Calu3 (cell line): ENCODE measurements at regions of chr14 and their contacts with region 1.

Region 1: GRCh38 chr14:56491299-56492285 is 88.0 kb upstream of the TMEM260 start:
- DNase-seq: peak; percentile 41
- H3K4me3 Mint-ChIP-seq: no peak overlapping the region
- H3K27ac Mint-ChIP-seq: no peak overlapping the region
- H3K4me1 Mint-ChIP-seq: no peaks in the 10 kb centered on the region
- H3K27me3 Mint-ChIP-seq: peaks cover 65% of the 10 kb centered on the region
- CTCF ChIP-seq: peak; percentile 66

Region 2: GRCh38 chr14:56331592-56332216 is 159.9 kb before region 1 on chr14:
- CTCF ChIA-PET with region 1: no interaction called
- intact Hi-C with region 1: no loop called
- DNase-seq: no peak
- H3K4me3 Mint-ChIP-seq: no peak overlapping the region
- H3K27ac Mint-ChIP-seq: no peak overlapping the region
- H3K4me1 Mint-ChIP-seq: peaks cover 9% of the 10 kb centered on the region
- H3K27me3 Mint-ChIP-seq: no peaks in the 10 kb centered on the region
- CTCF ChIP-seq: no peak

Region 3: DNA sequence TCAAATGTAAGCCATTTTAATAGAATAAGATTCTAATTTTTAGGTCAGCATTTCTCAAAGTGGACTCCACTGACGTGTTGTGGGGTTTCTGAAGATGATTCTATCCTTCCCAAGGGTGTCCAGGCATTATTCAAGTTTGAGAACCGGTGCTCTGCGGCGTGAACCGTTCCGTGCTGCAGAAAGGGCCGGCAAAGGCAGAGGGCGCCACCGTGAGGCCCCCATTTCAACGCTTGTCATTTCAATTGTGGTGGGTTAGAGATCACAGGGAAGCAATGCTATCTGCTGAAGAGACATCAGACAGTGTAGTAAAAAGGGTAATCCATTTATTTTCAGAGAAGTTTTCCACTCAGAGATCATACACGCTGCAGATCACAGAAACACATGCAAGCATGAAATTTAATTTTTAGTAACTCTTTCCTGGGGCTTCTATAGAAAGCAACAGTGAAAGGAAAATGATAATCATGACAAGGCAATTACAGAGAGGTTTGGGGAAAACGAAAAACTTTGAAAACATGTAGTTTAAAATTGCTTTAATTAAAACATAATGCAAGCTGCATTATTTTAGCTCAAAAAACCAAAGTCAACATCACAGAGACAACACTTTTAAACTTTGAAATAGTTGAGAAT is 575.4 kb after region 1 on chr14:
- CTCF ChIA-PET with region 1: no interaction called
- intact Hi-C with region 1: loop called (anchors 5 kb)
- DNase-seq: peak; percentile 52
- H3K4me3 Mint-ChIP-seq: no peak overlapping the region
- H3K27ac Mint-ChIP-seq: no peak overlapping the region
- H3K4me1 Mint-ChIP-seq: no peaks in the 10 kb centered on the region
- H3K27me3 Mint-ChIP-seq: peaks cover 11% of the 10 kb centered on the region
- CTCF ChIP-seq: peak; percentile 55

Region 4: DNA sequence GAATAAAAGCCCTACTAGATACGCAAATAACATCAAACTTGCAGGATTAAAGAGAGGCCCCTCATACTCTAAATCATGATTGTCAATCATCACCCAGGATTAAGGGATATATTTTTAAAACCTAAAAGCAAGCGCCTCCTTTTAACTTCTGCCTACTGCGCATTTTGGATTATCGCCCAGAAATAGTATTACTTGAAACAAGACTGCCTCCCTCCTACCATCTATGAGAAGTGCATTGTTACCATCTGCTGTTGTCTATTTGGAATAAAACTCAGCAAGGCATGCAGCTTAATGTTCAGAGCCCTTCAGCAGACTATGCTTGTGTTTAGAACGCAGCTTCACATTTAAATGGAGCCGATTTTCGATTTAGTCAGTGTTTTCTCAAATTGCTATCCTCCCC is 697.5 kb after region 1 on chr14:
- CTCF ChIA-PET with region 1: no interaction called
- intact Hi-C with region 1: loop called (anchors 5 kb)
- DNase-seq: no peak
- H3K4me3 Mint-ChIP-seq: no peak overlapping the region
- H3K27ac Mint-ChIP-seq: no peak overlapping the region
- H3K4me1 Mint-ChIP-seq: no peaks in the 10 kb centered on the region
- H3K27me3 Mint-ChIP-seq: peaks cover 51% of the 10 kb centered on the region
- CTCF ChIP-seq: no peak

Region 5: DNA sequence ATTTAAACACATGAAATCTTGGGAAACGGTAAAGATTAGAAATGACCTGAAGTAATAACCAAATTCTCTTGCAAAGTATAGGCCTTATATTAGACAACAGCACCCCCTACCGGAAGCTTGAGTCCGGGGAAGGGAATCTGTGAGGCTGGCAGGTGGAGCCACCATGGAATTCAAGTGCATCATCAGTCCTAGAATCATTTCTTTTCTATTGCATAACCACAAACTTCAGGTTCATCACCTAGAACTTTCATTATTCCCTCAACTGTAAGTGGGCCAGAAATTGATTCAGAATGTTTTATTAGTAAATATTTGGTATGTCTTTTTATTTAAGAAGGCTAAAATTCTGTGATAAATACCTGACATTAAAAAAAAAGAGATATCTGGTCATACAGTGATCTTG is 825.7 kb after region 1 on chr14:
- CTCF ChIA-PET with region 1: interaction called, 4 read pairs
- intact Hi-C with region 1: loop called (anchors 2 kb)
- DNase-seq: peak; percentile 86
- H3K4me3 Mint-ChIP-seq: no peak overlapping the region
- H3K27ac Mint-ChIP-seq: no peak overlapping the region
- H3K4me1 Mint-ChIP-seq: no peaks in the 10 kb centered on the region
- H3K27me3 Mint-ChIP-seq: no peaks in the 10 kb centered on the region
- CTCF ChIP-seq: peak; percentile 43